Posterior vena cava (tissue), 2 donors: ENCODE measurements at regions of chr18 and their contacts with region 1.

Region 1: DNA sequence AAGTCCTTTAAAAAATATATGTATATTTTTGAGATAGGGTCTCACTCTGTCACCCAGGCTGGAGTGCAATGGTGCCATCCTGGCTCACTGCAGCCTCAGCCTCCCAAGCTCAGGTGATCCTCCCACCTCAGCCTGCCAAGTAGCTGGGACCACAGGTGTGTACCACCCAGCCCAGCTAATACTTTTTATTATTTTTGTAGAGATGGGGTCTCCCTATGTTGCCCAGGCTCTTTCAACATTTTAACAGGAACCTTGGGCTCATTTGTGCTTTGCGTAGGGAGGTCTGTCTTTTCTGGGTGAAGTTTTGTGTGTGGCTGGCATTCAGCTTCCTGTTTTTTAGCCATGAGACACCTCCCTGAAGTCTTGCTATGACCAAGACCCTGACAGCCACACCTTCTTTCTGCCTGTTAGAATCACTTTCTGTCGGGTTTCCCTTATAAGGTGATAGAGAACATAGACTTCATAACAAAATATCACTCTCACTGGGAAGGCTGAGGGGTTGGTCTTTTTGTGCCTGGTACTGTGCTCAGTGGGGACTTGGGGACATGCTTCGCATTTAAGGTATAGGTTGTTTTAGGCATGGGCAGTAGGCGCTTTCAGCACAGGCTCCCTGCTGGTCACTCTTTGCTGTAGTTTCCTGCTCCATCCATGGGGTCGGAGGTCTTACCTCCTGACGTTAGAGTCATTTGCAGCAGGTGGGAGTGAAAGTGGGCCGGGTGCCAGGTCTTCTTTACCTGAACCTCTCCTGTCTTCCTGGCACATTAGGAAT is 3.4 kb downstream of the RAB31 start:
- DNase-seq: no peak

Region 2: DNA sequence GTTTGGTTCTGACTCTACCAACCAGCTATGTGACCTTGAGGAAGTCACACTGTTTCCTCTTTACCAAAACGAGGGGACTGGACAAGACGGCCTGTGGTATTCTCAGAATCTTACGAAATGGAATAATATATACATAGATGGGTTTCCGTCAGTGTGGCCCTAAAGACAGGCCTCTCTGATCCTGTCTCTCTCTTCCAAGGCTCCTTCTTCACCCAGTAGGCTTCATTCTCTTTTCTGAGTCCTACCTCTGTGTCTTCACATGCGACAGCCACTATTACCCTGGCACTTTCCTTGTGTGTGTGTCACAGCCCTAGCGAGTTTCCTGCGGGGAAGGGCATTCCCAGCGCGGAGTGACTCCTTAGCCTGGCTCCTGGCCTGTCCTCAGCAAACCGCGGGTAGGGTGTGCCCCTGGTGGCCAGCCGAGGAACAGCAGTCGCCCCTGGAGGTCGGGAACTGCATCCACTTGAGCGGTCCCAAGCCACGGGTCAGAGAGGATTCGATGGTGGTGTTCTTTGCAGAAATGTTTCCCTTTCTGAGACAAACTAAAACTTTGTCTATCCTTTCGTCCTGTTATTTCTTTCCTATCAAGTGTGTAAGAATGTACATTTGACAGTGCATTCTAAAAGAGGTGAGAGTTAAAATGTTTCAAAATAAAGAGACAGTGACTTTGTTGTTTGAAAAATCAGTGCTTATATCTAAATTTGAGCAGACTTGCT is 59.9 kb after region 1 on chr18:
- intact Hi-C with region 1: no loop called
- DNase-seq: peak; percentile 95

Region 3: DNA sequence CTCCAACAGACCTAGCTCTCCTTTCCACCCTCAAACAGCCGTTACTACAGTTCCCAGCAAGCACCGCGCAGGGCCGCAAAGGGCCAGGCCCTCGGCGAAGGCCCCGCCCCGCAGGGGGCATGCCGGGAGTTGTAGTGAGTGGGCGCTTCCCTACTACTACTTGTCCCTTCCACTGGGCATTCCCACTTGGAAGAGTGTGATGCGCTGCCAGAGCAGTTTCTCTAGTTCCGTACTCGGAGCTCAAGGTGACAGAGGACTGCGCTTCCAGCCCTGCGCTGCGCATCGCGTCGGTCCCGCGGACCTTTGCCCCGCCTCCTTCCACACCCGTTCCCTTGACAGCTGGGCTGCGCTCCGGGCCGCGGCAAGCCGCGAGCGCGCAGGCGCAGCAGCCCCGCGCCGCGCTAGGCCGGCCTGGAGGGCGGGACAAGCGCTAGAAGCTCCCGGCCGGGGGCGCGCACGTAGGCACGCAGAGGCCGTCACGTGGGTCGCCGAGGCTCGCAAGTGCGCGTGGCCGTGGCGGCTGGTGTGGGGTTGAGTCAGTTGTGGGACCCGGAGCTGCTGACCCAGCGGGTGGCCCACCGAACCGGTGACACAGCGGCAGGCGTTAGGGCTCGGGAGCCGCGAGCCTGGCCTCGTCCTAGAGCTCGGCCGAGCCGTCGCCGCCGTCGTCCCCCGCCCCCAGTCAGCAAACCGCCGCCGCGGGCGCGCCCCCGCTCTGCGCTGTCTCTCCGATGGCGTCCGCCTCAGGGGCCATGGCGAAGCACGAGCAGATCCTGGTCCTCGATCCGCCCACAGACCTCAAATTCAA is 202.2 kb after region 1 on chr18 and contains the start of gene VAPA:
- intact Hi-C with region 1: loop called in 1 of 2 experiments (anchors 10 kb)
- DNase-seq: peak; percentile 99
- total RNA-seq, gene VAPA: 172 to 203 TPM